ENCODE measurements at regions of chr11 and their contacts with region 1.

Region 1: DNA sequence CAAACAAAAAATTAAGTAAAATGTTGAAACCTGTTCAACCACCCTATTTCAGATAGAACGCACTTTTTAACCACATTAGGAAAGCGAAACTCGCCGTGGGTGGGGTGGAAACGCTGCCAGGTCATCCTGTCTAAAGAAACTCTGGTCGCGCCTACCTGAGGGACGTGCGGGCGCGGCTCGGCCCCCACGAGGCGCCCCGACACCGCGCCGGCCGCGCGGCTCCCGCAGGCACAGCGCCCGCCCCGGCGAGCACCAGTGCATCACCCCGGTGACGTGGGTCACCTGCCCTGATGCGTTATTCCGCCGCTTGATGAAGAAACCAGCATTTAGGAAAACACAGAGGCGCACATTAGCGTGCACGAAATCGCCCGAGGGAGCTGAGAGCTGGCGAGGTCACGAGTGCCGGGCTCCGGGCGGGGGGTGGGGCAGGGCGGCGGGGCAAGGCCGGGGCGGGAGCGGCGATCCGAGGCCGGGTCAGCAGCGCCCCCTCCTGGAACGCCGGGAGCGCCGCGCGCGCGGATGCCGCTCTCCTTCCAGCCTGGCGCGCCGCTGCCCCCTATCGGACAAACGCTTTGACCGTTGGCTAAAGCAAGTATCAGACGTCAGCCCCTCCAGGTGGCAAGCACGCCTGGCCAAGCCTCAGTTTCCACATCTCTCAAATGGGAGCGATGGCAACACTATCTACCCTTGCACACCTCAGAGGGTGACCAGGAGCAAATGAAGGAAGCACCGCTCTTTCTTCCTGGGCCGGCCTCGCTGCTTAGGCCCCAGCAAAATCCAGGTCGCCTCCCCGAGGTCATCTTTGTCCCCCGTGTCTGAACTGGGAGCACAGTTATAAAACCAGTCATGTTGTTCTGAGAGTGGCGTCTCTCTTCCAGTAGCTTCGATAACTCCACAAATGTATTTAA is 15.7 kb upstream of the SNX32 start:
- DNase-seq: peak; percentile 84 to 99 (median 95)

Region 2: GRCh38 chr11:65625628-65626342 is 192.3 kb before region 1 on chr11:
- intact Hi-C with region 1: loop called (anchors 1 kb)
- DNase-seq: peak in 8 of 10 donors; percentile 63 to 96 (median 76)

Region 3: GRCh38 chr11:65779851-65780577 is 38.1 kb before region 1 on chr11:
- intact Hi-C with region 1: loop called (anchors 2 kb)
- DNase-seq: peak; percentile 43 to 97 (median 74)